B cell (primary cell): ENCODE measurements at regions of chr2 and their contacts with region 1.

Region 1: GRCh38 chr2:177263451-177264208 is 897 bp downstream of the NFE2L2 start:
- DNase-seq: peak; percentile 98
- ATAC-seq: peak; percentile 48
- H3K4me3 ChIP-seq: peak overlapping the region; percentile 67 to 97 (median 92)
- H3K4me3 Mint-ChIP-seq: peak overlapping the region; percentile 98
- H3K27ac ChIP-seq: peak overlapping the region; percentile 99 to 100
- H3K27ac Mint-ChIP-seq: peak overlapping the region; percentile 98
- H3K4me1 ChIP-seq: peaks cover 34% of the 10 kb centered on the region in 2 donors
- H3K4me1 Mint-ChIP-seq: peaks cover 50% of the 10 kb centered on the region
- H3K27me3 ChIP-seq: no peaks in the 10 kb centered on the region
- H3K27me3 Mint-ChIP-seq: no peaks in the 10 kb centered on the region
- CTCF ChIP-seq: peak; percentile 88

Region 2: GRCh38 chr2:177212106-177212890 is 51.3 kb before region 1 on chr2 and contains the start of gene HNRNPA3:
- CTCF ChIA-PET with region 1: interaction called, 24 read pairs
- POLR2A ChIA-PET with region 1: interaction called, 50 read pairs
- intact Hi-C with region 1: loop called (anchors 1 kb)
- DNase-seq: peak; percentile 100
- ATAC-seq: peak; percentile 86
- H3K4me3 ChIP-seq: peak within 1 kb of the TSS; percentile 81 to 97 (median 94)
- H3K4me3 Mint-ChIP-seq: peak within 1 kb of the TSS; percentile 91
- H3K27ac ChIP-seq: peak within 1 kb of the TSS; percentile 99 to 100
- H3K27ac Mint-ChIP-seq: peak within 1 kb of the TSS; percentile 98
- H3K4me1 ChIP-seq: peaks cover 32 to 37% of the 10 kb centered on the region in 2 donors
- H3K4me1 Mint-ChIP-seq: peaks cover 47% of the 10 kb centered on the region
- H3K27me3 ChIP-seq: no peaks in the 10 kb centered on the region
- H3K27me3 Mint-ChIP-seq: no peaks in the 10 kb centered on the region
- CTCF ChIP-seq: no peak
- total RNA-seq, gene HNRNPA3: 197 and 200 TPM in 2 replicates

Region 3: GRCh38 chr2:177275041-177276020 is 11.7 kb after region 1 on chr2:
- CTCF ChIA-PET with region 1: interaction called, 15 read pairs
- POLR2A ChIA-PET with region 1: interaction called, 7 read pairs
- intact Hi-C with region 1: loop called (anchors 2 kb)
- DNase-seq: no peak
- ATAC-seq: no peak
- H3K4me3 ChIP-seq: no peak overlapping the region
- H3K4me3 Mint-ChIP-seq: no peak overlapping the region
- H3K27ac ChIP-seq: no peak overlapping the region
- H3K27ac Mint-ChIP-seq: no peak overlapping the region
- H3K4me1 ChIP-seq: no peaks in the 10 kb centered on the region
- H3K4me1 Mint-ChIP-seq: peaks cover under 1% of the 10 kb centered on the region
- H3K27me3 ChIP-seq: no peaks in the 10 kb centered on the region
- H3K27me3 Mint-ChIP-seq: no peaks in the 10 kb centered on the region
- CTCF ChIP-seq: no peak

Region 4: GRCh38 chr2:177296040-177296439 is 32.4 kb after region 1 on chr2:
- CTCF ChIA-PET with region 1: interaction called, 126 read pairs
- POLR2A ChIA-PET with region 1: interaction called, 9 read pairs
- intact Hi-C with region 1: loop called (anchors 1 kb)
- DNase-seq: peak; percentile 66
- ATAC-seq: peak; percentile 45
- H3K4me3 ChIP-seq: no peak overlapping the region
- H3K4me3 Mint-ChIP-seq: no peak overlapping the region
- H3K27ac ChIP-seq: no peak overlapping the region
- H3K27ac Mint-ChIP-seq: no peak overlapping the region
- H3K4me1 ChIP-seq: peaks cover 0 to 2% of the 10 kb centered on the region in 2 donors
- H3K4me1 Mint-ChIP-seq: peaks cover 4% of the 10 kb centered on the region
- H3K27me3 ChIP-seq: no peaks in the 10 kb centered on the region
- H3K27me3 Mint-ChIP-seq: no peaks in the 10 kb centered on the region
- CTCF ChIP-seq: peak; percentile 69

Region 5: GRCh38 chr2:177419274-177419673 is 155.6 kb after region 1 on chr2:
- CTCF ChIA-PET with region 1: interaction called, 26 read pairs
- POLR2A ChIA-PET with region 1: no interaction called
- intact Hi-C with region 1: loop called (anchors 5 kb)
- DNase-seq: no peak
- ATAC-seq: no peak
- H3K4me3 ChIP-seq: no peak overlapping the region
- H3K4me3 Mint-ChIP-seq: no peak overlapping the region
- H3K27ac ChIP-seq: no peak overlapping the region
- H3K27ac Mint-ChIP-seq: no peak overlapping the region
- H3K4me1 ChIP-seq: no peaks in the 10 kb centered on the region
- H3K4me1 Mint-ChIP-seq: peaks cover 2% of the 10 kb centered on the region
- H3K27me3 ChIP-seq: no peaks in the 10 kb centered on the region
- H3K27me3 Mint-ChIP-seq: no peaks in the 10 kb centered on the region
- CTCF ChIP-seq: no peak

Region 6: GRCh38 chr2:177520356-177520723 is 256.7 kb after region 1 on chr2:
- CTCF ChIA-PET with region 1: no interaction called
- POLR2A ChIA-PET with region 1: no interaction called
- intact Hi-C with region 1: no loop called
- DNase-seq: no peak
- ATAC-seq: no peak
- H3K4me3 ChIP-seq: no peak overlapping the region
- H3K4me3 Mint-ChIP-seq: no peak overlapping the region
- H3K27ac ChIP-seq: no peak overlapping the region
- H3K27ac Mint-ChIP-seq: no peak overlapping the region
- H3K4me1 ChIP-seq: no peaks in the 10 kb centered on the region
- H3K4me1 Mint-ChIP-seq: no peaks in the 10 kb centered on the region
- H3K27me3 ChIP-seq: no peaks in the 10 kb centered on the region
- H3K27me3 Mint-ChIP-seq: no peaks in the 10 kb centered on the region
- CTCF ChIP-seq: no peak